ENCODE measurements at regions of chr9 and their contacts with region 1.

Region 1: GRCh38 chr9:2800393-2801179 is 43.3 kb downstream of the PUM3 start:
- DNase-seq: peak; percentile 59
- H3K4me3 ChIP-seq: no peak overlapping the region
- H3K27ac ChIP-seq: no peak overlapping the region
- H3K4me1 ChIP-seq: peaks cover 14% of the 10 kb centered on the region
- H3K27me3 ChIP-seq: no peaks in the 10 kb centered on the region
- CTCF ChIP-seq: peak; percentile 47 to 63

Region 2: DNA sequence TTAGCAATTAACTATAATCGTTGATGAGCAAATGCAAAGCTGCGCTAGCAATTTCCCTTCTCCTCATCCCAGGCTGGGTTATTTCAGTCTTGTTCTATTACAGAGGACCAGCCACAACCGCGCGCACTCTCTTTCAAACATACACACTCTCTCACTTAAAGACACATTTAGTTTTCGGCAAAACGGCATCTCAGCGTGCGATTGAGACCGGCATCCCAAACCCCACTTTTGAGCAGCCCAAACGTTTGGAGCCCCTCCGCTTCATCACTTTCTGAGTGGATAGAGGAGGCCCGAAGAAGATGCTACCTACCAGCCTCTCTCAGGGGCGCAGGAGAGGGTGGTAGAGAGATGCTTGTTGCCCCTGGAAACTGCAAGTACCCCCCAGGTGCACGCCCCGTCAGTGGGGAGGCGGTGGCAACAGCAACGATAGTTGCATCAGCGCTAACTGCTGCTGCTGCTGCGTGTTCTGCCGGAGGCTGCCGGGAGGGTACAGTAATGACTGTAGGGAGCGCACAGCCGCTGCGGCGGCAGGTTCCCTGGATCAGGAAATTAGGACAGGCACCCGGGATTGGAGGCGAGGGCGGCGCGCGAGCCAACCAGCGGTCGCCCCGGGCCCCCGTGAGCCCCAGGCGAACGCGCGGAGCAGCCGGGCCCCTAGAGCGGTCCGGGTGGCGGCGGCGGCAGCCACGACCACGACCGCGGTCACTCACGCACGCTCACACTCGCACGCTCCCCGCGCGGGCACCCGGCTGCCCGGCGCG is 179.5 kb before region 1 on chr9:
- CTCF ChIA-PET with region 1: no interaction called
- dilution Hi-C with region 1: no loop called
- in situ Hi-C with region 1: no loop called
- intact Hi-C with region 1: loop called (anchors 1 kb)
- DNase-seq: peak; percentile 76
- H3K4me3 ChIP-seq: peak overlapping the region; percentile 66 to 86 (median 80)
- H3K27ac ChIP-seq: no peak overlapping the region
- H3K4me1 ChIP-seq: peaks cover 18% of the 10 kb centered on the region
- H3K27me3 ChIP-seq: no peaks in the 10 kb centered on the region
- CTCF ChIP-seq: no peak

Region 3: GRCh38 chr9:2722715-2723114 is 77.9 kb before region 1 on chr9:
- CTCF ChIA-PET with region 1: no interaction called
- dilution Hi-C with region 1: loop called (anchors 5 kb)
- in situ Hi-C with region 1: no loop called
- intact Hi-C with region 1: no loop called
- DNase-seq: peak; percentile 88
- H3K4me3 ChIP-seq: no peak overlapping the region
- H3K27ac ChIP-seq: peak overlapping the region; percentile 11
- H3K4me1 ChIP-seq: peaks cover 22% of the 10 kb centered on the region
- H3K27me3 ChIP-seq: no peaks in the 10 kb centered on the region
- CTCF ChIP-seq: no peak

Region 4: GRCh38 chr9:2857564-2858198 is 57.1 kb after region 1 on chr9:
- CTCF ChIA-PET with region 1: no interaction called
- dilution Hi-C with region 1: no loop called
- in situ Hi-C with region 1: no loop called
- intact Hi-C with region 1: no loop called
- DNase-seq: peak; percentile 54
- H3K4me3 ChIP-seq: no peak overlapping the region
- H3K27ac ChIP-seq: no peak overlapping the region
- H3K4me1 ChIP-seq: no peaks in the 10 kb centered on the region
- H3K27me3 ChIP-seq: peaks cover 4% of the 10 kb centered on the region
- CTCF ChIP-seq: peak; percentile 82 to 94

Measured in mammary epithelial cell (primary cell).